Naive thymus-derived CD4-positive, alpha-beta T cell (primary cell): ENCODE measurements at regions of chr5 and their contacts with region 1.

Region 1: DNA sequence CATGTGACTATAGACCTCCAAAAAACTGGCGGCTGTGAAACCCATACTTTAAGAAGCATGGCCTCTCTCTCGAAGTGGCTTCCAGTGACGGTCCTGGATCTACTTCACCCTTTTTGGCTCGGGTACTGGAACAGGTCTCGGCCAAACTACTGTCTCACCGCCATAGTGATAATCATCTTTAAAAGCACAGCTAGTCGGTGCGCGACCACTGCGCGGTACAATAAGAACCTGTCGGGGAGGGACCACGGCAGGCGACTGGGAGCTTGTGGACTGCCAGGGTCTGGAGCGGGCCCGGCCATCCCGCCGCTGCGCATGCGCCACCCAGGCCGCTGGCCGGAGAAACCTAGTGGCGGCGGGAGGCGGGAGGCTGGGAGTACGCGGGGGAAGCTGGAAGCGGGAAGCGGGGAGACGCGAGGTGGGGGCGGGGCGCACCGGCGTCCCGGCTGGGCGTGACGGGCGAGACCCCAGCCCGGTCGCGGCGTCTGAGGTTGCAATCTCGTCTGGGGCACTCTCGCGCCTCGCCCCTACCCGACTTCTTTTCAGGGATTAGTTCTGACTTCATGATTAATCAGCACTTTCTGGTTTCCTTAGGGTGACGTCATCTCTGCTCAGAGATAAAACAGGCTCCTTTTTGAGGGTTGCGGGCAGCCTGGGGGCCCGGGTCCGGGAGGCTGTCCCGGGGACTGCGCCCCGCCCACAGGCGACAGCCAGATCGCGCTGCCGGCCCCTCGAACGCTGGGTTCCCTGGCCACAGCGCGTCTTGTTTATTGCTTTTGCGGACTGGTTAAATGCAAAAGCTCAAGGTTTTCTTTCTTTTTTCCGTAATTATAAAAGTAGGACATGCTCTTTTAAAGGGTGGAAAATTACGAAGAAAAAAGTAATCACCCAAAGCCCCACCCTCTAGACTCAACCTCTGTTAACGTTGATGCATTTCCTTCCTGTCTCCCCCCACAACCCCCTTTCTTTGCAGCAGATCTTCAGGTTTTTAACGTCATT is 266.8 kb downstream of the CWC27 start:
- DNase-seq: peak; percentile 60 to 92 (median 85)
- ATAC-seq: peak; percentile 88
- H3K4me3 ChIP-seq: peak overlapping the region; percentile 78
- H3K4me3 Mint-ChIP-seq: peak overlapping the region; percentile 74 to 94 (median 82)
- H3K27ac ChIP-seq: peak overlapping the region; percentile 84
- H3K27ac Mint-ChIP-seq: peak overlapping the region; percentile 84 to 96 (median 90)
- H3K4me1 ChIP-seq: peaks cover 20% of the 10 kb centered on the region in 2 donors
- H3K4me1 Mint-ChIP-seq: peaks cover 3 to 36% (median 29%) of the 10 kb centered on the region in 7 donors
- H3K27me3 ChIP-seq: no peaks in the 10 kb centered on the region
- H3K27me3 Mint-ChIP-seq: no peaks in the 10 kb centered on the region

Region 2: DNA sequence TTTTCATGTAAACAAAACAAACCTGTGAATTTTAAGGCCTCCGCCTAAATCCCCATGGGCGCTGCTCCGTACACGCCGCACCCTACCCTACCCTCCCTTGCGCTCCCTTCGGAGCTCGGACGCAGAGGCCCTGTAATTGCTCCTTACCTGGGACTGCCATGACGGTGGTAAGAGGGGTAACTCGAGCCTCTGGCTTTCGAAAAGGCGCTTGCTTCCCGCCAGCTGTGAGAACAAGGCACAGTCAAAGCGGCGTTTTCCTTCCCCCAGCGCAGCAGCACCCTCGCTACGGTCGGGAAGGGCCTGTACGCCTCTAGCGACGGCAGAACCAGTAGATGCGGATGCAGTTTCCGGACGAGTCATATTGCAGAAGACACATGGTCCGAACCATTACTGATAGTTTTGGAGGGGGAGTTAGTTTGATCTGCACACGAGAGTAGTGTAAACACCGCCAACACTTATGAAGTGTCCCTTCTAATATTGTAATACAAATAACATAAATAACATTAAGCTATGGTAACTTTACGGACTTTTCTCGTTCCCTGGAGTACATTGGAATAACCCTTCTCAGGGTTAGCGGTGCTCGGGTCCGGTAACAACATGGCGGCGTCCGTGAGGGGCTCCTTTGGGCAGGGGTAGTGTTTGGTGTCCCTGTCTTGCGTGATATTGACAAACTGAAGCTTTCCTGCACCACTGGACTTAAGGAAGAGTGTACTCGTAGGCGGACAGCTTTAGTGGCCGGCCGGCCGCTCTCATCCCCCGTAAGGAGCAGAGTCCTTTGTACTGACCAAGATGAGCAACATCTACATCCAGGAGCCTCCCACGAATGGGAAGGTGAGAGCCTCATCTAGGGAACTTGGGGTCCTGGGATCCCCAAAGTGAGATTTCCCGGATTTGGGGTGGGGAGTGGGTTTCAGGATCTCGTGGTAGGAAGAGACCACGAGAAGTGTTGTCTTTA is 266.9 kb before region 1 on chr5 and contains the starts of genes CWC27 and SREK1IP1:
- CTCF ChIA-PET with region 1: no interaction called
- POLR2A ChIA-PET with region 1: no interaction called
- intact Hi-C with region 1: loop called (anchors 1 kb)
- DNase-seq: peak; percentile 65 to 88 (median 83)
- ATAC-seq: peak; percentile 98
- H3K4me3 ChIP-seq: peak within 1 kb of the TSS; percentile 90
- H3K4me3 Mint-ChIP-seq: peak within 1 kb of the TSS; percentile 94 to 100 (median 99)
- H3K27ac ChIP-seq: peak within 1 kb of the TSS; percentile 88
- H3K27ac Mint-ChIP-seq: peak within 1 kb of the TSS; percentile 96 to 100 (median 98)
- H3K4me1 ChIP-seq: peaks cover 21 to 37% of the 10 kb centered on the region in 2 donors
- H3K4me1 Mint-ChIP-seq: peaks cover 34 to 80% (median 77%) of the 10 kb centered on the region in 7 donors
- H3K27me3 ChIP-seq: no peaks in the 10 kb centered on the region
- H3K27me3 Mint-ChIP-seq: no peaks in the 10 kb centered on the region
- total RNA-seq, gene CWC27: 17.8 to 27.4 (median 21.0) TPM
- total RNA-seq, gene SREK1IP1: 11.7 to 29.9 (median 21.7) TPM

Region 3: GRCh38 chr5:64958757-64959391 is 76.6 kb before region 1 on chr5:
- CTCF ChIA-PET with region 1: no interaction called
- POLR2A ChIA-PET with region 1: no interaction called
- intact Hi-C with region 1: loop called in 1 of 2 experiments (anchors 5 kb)
- DNase-seq: peak in 5 of 9 donors; percentile 3 to 20 (median 9)
- ATAC-seq: no peak
- H3K4me3 ChIP-seq: no peak overlapping the region
- H3K4me3 Mint-ChIP-seq: no peak overlapping the region
- H3K27ac ChIP-seq: no peak overlapping the region
- H3K27ac Mint-ChIP-seq: no peak overlapping the region
- H3K4me1 ChIP-seq: no peaks in the 10 kb centered on the region
- H3K4me1 Mint-ChIP-seq: no peaks in the 10 kb centered on the region
- H3K27me3 ChIP-seq: no peaks in the 10 kb centered on the region
- H3K27me3 Mint-ChIP-seq: peaks cover 0 to 3% (median 0%) of the 10 kb centered on the region in 5 donors

Region 4: DNA sequence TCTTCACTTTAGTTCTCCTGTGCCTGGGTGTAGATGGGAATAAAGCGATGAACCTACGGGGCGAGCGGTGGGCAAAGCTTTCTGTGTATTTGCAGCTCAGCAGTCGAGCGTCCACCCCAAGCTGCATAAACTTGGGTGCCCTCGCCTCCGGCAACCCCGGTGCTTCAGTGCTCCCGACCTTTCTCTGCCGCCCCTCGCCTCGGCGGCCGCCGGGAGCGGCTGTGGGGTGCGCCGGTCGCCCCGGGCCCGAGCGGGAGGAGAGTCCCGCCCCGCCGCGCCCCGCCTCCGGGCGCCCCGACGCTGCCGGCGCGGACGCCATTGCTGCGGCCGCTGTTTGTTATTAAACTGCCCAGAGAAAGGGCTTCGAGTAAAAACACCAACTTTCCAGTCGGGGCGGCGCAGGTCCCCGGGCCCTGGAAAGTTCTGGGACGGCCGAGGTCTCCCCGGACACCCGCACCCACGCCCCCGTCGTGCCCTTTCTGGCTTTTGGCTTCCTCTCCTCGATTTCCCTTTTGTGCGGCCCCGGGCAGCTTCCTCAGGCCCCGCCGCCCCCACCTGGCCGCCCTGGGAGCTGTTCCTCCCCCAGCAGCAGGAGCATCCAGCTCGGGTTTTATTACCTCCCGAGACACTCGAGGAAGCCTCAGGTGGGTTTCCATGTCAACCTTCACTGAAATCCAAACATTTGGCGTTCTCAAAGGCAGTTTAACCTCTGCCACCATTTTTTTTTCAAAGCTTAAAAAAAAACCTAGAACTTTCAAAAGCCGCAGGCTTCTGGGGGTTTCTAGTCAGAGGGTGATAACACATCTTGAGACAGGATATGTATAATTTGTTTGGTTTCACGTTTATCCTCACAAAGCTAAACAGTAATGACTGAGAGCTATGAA is 67.6 kb after region 1 on chr5:
- CTCF ChIA-PET with region 1: no interaction called
- POLR2A ChIA-PET with region 1: interaction called, 3 read pairs
- intact Hi-C with region 1: loop called (anchors 1 kb)
- DNase-seq: peak; percentile 44 to 67 (median 57)
- ATAC-seq: peak; percentile 78
- H3K4me3 ChIP-seq: peak overlapping the region; percentile 63
- H3K4me3 Mint-ChIP-seq: peak overlapping the region; percentile 82 to 93 (median 87)
- H3K27ac ChIP-seq: peak overlapping the region; percentile 82
- H3K27ac Mint-ChIP-seq: peak overlapping the region; percentile 83 to 96 (median 92)
- H3K4me1 ChIP-seq: peaks cover 12% of the 10 kb centered on the region in 2 donors
- H3K4me1 Mint-ChIP-seq: peaks cover 32 to 52% (median 41%) of the 10 kb centered on the region in 7 donors
- H3K27me3 ChIP-seq: no peaks in the 10 kb centered on the region
- H3K27me3 Mint-ChIP-seq: peaks cover 0 to 22% (median 0%) of the 10 kb centered on the region in 5 donors

Region 5: GRCh38 chr5:65907138-65907537 is 871.6 kb after region 1 on chr5:
- CTCF ChIA-PET with region 1: no interaction called
- POLR2A ChIA-PET with region 1: no interaction called
- intact Hi-C with region 1: loop called in 1 of 2 experiments (anchors 5 kb)
- DNase-seq: no peak
- ATAC-seq: no peak
- H3K4me3 ChIP-seq: no peak overlapping the region
- H3K4me3 Mint-ChIP-seq: no peak overlapping the region
- H3K27ac ChIP-seq: no peak overlapping the region
- H3K27ac Mint-ChIP-seq: no peak overlapping the region
- H3K4me1 ChIP-seq: no peaks in the 10 kb centered on the region
- H3K4me1 Mint-ChIP-seq: no peaks in the 10 kb centered on the region
- H3K27me3 ChIP-seq: no peaks in the 10 kb centered on the region
- H3K27me3 Mint-ChIP-seq: no peaks in the 10 kb centered on the region